ENCODE measurements at regions of chr1 and their contacts with region 1.

Region 1: DNA sequence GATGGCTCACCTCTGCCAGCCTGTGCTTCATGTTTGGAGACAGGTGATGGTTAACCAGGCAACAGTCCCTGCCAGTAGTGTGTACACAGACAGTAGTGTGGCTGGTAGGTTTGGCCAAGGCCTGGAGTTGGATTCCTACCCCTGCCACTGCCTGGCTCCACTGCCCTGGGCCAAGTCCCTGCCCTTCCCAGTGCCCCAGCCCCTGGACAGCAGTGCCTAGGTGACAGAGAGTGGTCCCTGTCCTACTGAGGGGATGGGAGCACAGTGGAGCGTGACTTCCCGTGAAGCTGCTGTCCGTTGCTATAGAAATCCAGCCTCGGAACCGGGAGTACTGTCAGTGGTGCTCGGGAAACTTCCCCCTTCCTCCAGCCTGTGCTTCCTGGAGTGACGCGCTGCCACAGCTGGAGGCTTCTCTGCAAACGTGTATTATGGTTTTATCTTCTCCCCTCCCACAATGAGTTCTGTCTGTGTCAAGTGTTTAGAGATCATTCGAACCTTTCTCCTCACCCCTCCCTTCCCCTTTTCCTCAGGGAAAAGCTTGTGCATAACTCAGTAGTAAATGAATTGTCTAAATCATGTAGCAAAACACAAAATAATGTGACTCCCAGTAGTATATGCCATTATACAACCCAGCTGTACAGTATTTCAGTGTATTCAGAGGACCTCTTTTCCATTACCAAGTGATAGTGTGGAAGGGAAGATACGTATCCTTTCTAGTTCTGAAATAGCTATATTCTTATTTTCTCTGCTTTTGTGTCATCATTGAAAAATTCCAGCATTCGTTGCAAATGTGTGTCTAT is 73.4 kb downstream of the GALNT2 start:
- DNase-seq: peak; percentile 80
- H3K4me3 ChIP-seq: no peak overlapping the region
- H3K27ac ChIP-seq: peak overlapping the region in 3 of 4 donors; percentile 15 to 65 (median 52)
- H3K4me1 ChIP-seq: peaks cover 0 to 71% (median 56%) of the 10 kb centered on the region in 4 donors
- H3K27me3 ChIP-seq: no peaks in the 10 kb centered on the region
- CTCF ChIP-seq: no peak
- EP300 ChIP-seq: no peak
- POLR2A ChIP-seq: no peak

Region 2: GRCh38 chr1:229848752-229849677 is 291.4 kb before region 1 on chr1:
- intact Hi-C with region 1: no loop called
- DNase-seq: no peak
- H3K4me3 ChIP-seq: no peak overlapping the region
- H3K27ac ChIP-seq: no peak overlapping the region
- H3K4me1 ChIP-seq: peaks cover 0 to 10% (median 9%) of the 10 kb centered on the region in 4 donors
- H3K27me3 ChIP-seq: no peaks in the 10 kb centered on the region
- CTCF ChIP-seq: no peak
- EP300 ChIP-seq: no peak
- POLR2A ChIP-seq: no peak

Region 3: DNA sequence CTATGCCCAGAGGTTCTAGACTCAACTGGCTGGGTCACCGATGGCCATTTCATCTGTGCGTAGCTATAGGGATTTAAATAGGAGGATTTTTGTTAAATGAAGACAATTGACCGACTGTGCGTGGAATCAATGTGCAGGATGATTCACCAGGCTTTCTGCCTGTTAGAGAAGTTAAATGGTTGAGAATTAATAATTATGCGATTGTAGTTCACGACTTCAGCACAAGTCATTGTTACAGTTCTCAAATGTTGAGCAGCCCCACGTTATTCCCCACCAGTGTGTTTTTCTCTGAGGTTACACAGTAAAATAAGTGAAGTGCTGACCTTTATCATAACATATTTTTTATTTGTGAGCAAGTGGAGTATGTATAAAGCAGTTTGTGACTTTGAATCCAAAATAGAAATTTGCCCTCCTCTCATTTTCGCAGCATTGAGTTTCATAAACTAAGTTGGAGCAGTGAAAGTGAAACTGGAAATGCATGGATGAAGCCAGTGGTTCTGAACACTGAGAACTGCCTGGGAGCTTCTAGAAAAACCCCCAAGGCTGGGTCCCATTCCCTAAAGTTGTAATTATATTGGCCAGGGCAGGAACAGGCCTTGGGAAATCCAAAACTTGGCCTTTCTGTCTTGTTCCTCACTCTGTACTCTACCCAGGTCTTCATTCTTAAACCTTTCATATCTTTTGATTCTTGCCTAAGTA is 29.2 kb after region 1 on chr1:
- intact Hi-C with region 1: no loop called
- DNase-seq: no peak
- H3K4me3 ChIP-seq: peak overlapping the region in 2 of 4 donors; percentile 8 to 21
- H3K27ac ChIP-seq: peak overlapping the region; percentile 25 to 63 (median 46)
- H3K4me1 ChIP-seq: peaks cover 0 to 11% (median 5%) of the 10 kb centered on the region in 4 donors
- H3K27me3 ChIP-seq: no peaks in the 10 kb centered on the region
- CTCF ChIP-seq: no peak
- EP300 ChIP-seq: no peak
- POLR2A ChIP-seq: no peak

Region 4: DNA sequence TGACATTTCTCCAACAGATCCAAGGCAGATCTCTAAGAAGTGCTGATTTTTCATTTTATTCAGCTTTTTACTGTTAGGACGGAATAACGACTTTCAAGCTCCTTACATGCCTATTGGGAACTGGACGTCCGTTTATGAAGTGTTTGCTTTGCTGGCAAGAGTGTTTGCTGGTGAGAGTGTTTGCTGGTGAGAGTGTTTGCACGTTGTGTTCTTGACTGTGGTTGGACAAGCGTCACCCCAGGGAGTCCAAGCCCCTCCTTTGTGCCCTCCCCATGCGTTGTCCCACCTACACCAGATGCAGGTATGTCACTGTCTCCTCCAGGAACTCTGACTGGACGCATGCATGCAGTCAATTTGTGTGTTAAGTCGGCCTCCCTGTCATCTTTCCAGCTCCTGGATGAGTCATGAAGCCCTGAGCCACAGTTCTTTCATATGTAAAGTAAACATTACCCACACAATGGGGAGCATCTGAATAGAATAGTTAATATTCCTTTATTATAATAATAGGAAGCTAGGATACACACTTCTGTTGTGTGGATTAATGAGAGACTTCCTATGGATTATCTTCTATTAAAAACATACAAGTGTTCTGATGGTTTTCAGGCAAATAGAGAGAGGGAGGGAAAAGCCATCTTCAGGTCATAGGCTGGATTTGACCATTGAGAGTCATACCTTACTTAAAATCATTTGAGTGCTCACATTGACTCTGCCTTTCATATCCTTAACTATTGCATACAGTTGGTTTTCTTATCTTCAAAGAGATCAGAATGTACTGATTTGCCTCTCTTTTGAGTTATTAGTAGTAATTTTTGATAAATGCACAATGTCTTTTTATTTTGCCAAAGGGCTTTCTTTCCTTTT is 45.8 kb after region 1 on chr1:
- intact Hi-C with region 1: loop called (anchors 5 kb)
- DNase-seq: peak; percentile 85
- H3K4me3 ChIP-seq: peak overlapping the region in 1 of 4 donors; percentile 22
- H3K27ac ChIP-seq: peak overlapping the region; percentile 42 to 79 (median 56)
- H3K4me1 ChIP-seq: peaks cover 0 to 38% (median 36%) of the 10 kb centered on the region in 4 donors
- H3K27me3 ChIP-seq: no peaks in the 10 kb centered on the region
- CTCF ChIP-seq: no peak
- EP300 ChIP-seq: no peak
- POLR2A ChIP-seq: peak in 1 of 2 donors; percentile 17

Measured in sigmoid colon (tissue), 7 donors.